HAP-1 (cell line): ENCODE measurements at regions of chr10 and their contacts with region 1.

Region 1: GRCh38 chr10:21278491-21279239 is 246.8 kb downstream of the SKIDA1 start:
- DNase-seq: peak; percentile 87 to 98
- H3K4me3 ChIP-seq: no peak overlapping the region
- H3K4me1 ChIP-seq: peaks cover 23% of the 10 kb centered on the region
- H3K27me3 ChIP-seq: no peaks in the 10 kb centered on the region

Region 2: DNA sequence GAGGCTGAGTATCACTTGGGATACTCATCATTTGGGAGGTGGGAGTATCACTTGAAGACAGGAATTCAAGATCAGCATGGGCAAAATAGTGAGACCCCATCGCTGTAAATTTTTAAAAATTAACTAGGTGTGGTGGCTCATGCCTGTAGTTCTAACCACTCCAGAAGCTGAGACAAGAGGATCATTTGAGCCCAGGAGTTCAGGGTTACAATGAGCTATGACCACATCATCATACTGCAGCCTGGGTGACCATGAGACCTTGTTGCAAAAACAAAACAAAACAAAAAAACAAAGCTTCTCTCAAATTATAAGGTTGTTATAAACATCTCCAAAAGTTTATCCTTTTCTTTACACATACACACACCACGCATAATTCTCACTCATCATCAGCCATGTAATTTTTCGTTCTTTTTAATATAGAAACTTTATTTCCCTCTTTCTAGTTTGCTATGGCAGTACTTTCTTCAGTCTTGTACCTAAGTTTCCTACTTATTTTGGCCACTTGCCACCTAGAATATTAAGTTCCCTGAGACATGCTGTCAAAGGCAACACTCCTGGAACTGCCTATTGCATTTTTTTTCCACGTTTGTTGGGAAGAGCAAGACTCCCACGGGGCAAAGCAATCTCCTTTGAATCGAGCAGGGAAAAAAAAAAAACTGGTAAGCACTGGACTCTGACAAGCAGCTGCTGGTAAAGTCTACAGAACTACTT is 209.7 kb after region 1 on chr10:
- in situ Hi-C with region 1: loop called (anchors 10 kb)
- DNase-seq: no peak
- H3K4me3 ChIP-seq: no peak overlapping the region
- H3K4me1 ChIP-seq: 0 out of 2 replicates have a peak, but pooled peaks cover 4% of the 10 kb centered on the region
- H3K27me3 ChIP-seq: no peaks in the 10 kb centered on the region

Region 3: GRCh38 chr10:21732067-21732772 is 453.6 kb after region 1 on chr10:
- in situ Hi-C with region 1: loop called (anchors 10 kb)
- DNase-seq: peak; percentile 65 to 84
- H3K4me3 ChIP-seq: no peak overlapping the region
- H3K4me1 ChIP-seq: peaks cover 15% of the 10 kb centered on the region
- H3K27me3 ChIP-seq: no peaks in the 10 kb centered on the region

Region 4: DNA sequence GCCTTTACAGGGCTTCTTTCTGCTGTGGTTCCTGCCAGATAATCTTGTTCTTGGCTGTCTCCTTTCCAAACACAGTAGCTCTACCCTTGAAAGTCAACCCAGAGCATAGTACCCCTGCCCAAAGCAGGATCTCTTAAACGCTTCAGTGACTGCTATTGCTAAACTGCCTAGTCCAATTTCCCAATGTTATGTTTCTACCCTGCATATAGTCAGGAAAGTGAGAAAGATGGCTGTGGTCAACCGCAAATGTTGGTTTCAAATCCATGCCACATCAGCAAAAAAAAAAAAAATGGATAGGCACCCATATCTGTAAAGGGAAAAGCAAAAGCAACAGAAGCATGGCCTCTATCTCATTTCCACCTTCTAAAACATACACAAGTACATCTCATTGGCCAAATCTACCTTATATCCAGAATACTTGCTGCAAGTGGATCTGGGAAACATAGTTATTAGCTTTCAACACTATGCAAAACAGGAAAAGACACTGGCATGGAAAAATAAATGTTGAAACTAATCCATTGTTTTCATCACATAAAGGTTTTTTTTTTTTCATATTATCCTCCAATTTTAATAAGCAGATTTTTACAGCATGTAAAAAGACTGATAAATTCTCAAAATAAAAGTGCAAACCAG is 665.1 kb after region 1 on chr10:
- in situ Hi-C with region 1: loop called (anchors 10 kb)
- DNase-seq: no peak
- H3K4me3 ChIP-seq: no peak overlapping the region
- H3K4me1 ChIP-seq: peaks cover 3% of the 10 kb centered on the region; the same call in 1 of the 2 replicates
- H3K27me3 ChIP-seq: no peaks in the 10 kb centered on the region